ENCODE measurements at regions of chr2 and their contacts with region 1.

Region 1: GRCh38 chr2:182715896-182716668 is at the start of gene DNAJC10:
- DNase-seq: peak; percentile 87
- ATAC-seq: peak; percentile 91
- H3K4me3 ChIP-seq: peak within 1 kb of the TSS; percentile 94
- H3K27ac ChIP-seq: peak within 1 kb of the TSS; percentile 57
- H3K4me1 ChIP-seq: peaks cover 18% of the 10 kb centered on the region
- H3K27me3 ChIP-seq: no peaks in the 10 kb centered on the region
- CTCF ChIP-seq: no peak
- total RNA-seq, gene DNAJC10: 49.0 and 62.9 TPM in 2 replicates

Region 2: DNA sequence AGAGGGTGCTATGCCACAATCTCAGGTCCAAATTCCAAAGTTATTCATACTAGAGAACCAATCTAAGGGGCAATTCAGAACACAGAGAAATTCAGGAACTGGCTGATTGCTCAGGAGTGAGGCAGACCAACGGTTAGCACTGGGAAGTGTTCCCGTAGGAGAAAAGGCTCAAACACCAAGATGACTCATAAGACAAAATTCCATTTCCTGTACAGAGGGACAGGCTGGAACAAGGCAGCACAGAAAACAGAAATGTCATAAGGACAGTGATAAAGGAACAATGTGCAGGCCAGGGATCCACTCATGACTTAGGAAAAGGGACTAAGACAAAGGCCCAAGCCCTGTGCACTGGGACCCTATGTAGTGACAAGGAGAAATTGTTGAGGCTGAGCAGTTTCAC is 343.4 kb before region 1 on chr2:
- CTCF ChIA-PET with region 1: no interaction called
- POLR2A ChIA-PET with region 1: no interaction called
- intact Hi-C with region 1: loop called (anchors 10 kb)
- DNase-seq: peak; percentile 90
- ATAC-seq: peak; percentile 99
- H3K4me3 ChIP-seq: peak overlapping the region; percentile 20; the same call in 1 of the 2 replicates
- H3K27ac ChIP-seq: peak overlapping the region; percentile 52
- H3K4me1 ChIP-seq: peaks cover 14% of the 10 kb centered on the region
- H3K27me3 ChIP-seq: no peaks in the 10 kb centered on the region
- CTCF ChIP-seq: no peak

Region 3: GRCh38 chr2:182666674-182667314 is 49.3 kb before region 1 on chr2:
- CTCF ChIA-PET with region 1: interaction called, 13 read pairs
- POLR2A ChIA-PET with region 1: no interaction called
- intact Hi-C with region 1: loop called (anchors 1 kb)
- DNase-seq: peak; percentile 42
- ATAC-seq: peak; percentile 55
- H3K4me3 ChIP-seq: no peak overlapping the region
- H3K27ac ChIP-seq: no peak overlapping the region
- H3K4me1 ChIP-seq: no peaks in the 10 kb centered on the region
- H3K27me3 ChIP-seq: 0 out of 2 replicates have a peak, but pooled peaks cover 2% of the 10 kb centered on the region
- CTCF ChIP-seq: peak; percentile 77

Region 4: GRCh38 chr2:183927406-183928325 is 1211.6 kb after region 1 on chr2:
- CTCF ChIA-PET with region 1: no interaction called
- POLR2A ChIA-PET with region 1: no interaction called
- intact Hi-C with region 1: no loop called
- DNase-seq: peak; percentile 82
- ATAC-seq: peak; percentile 66
- H3K4me3 ChIP-seq: no peak overlapping the region
- H3K27ac ChIP-seq: peak overlapping the region; percentile 78
- H3K4me1 ChIP-seq: peaks cover 14% of the 10 kb centered on the region
- H3K27me3 ChIP-seq: no peaks in the 10 kb centered on the region
- CTCF ChIP-seq: no peak